ENCODE measurements at regions of chr2 and their contacts with region 1.

Region 1: GRCh38 chr2:37629529-37629928 is 41.9 kb downstream of the CDC42EP3 start:
- DNase-seq: no peak
- ATAC-seq: peak; percentile 32
- H3K4me3 ChIP-seq: no peak overlapping the region
- H3K27ac ChIP-seq: peak overlapping the region; percentile 76
- H3K4me1 ChIP-seq: peaks cover 47% of the 10 kb centered on the region
- H3K27me3 ChIP-seq: no peaks in the 10 kb centered on the region
- CTCF ChIP-seq: no peak
- EP300 ChIP-seq: peak; percentile 35 to 41; a peak in 1 of 4 replicates
- POLR2A ChIP-seq: no peak
- RAD21 ChIP-seq: no peak; the same call in 1 of the 2 replicates

Region 2: GRCh38 chr2:37665604-37666362 is 36.3 kb after region 1 on chr2:
- CTCF ChIA-PET with region 1: interaction called, 10 read pairs
- POLR2A ChIA-PET with region 1: interaction called, 52 read pairs
- RAD21 ChIA-PET with region 1: interaction called, 122 read pairs
- SMC1A ChIA-PET with region 1: interaction called, 96 read pairs
- in situ Hi-C with region 1: no loop called
- intact Hi-C with region 1: loop called (anchors 5 kb)
- DNase-seq: no peak
- ATAC-seq: peak; percentile 2; the same call in 1 of the 3 replicates
- H3K4me3 ChIP-seq: peak overlapping the region; percentile 82
- H3K27ac ChIP-seq: peak overlapping the region; percentile 28; the same call in 1 of the 2 replicates
- H3K4me1 ChIP-seq: 0 out of 2 replicates have a peak, but pooled peaks cover 3% of the 10 kb centered on the region
- H3K27me3 ChIP-seq: no peaks in the 10 kb centered on the region
- CTCF ChIP-seq: no peak
- EP300 ChIP-seq: no peak
- POLR2A ChIP-seq: no peak
- RAD21 ChIP-seq: no peak

Region 3: DNA sequence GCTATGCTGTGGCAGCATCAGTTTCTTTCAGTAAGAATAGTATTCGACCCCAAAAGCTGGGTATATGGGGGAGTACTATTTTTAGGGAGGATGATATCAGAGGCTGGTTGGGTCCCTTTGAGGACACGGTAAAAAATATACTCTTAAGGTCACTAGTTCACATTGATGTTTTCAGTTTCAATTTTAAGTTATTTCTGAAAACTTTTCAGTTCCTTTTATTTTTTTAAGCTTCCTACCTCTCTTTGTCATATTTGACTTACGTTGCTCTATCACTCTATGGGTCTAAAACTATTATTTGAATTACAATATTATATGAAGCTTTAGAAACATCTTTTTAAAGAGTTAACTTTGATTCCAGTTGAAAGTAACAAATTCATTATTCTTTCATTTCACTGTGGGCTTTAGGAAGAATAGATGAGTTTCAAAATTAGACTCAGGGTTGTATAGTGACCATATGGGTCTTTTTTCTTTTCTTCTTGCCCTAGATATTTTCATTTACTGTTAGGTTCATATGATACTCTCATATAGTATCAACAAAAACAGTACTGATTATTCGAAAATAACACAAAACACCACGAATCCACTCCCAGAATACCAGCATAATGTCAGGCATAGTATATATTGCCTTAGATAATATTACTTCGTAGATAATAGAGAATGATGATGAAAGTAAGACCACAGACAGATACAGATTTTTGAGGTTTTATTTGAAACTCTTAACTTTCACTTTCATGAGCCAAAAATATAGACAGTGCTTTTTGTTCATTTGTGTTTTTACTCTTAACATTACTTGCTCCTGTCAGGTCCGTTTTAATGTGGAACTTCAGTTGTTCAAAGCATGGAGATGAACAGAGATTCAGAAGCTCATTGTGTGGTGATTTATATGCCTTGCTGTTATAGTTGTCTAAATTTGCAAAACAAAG is 305.3 kb after region 1 on chr2:
- CTCF ChIA-PET with region 1: no interaction called
- POLR2A ChIA-PET with region 1: no interaction called
- RAD21 ChIA-PET with region 1: no interaction called
- SMC1A ChIA-PET with region 1: no interaction called
- in situ Hi-C with region 1: no loop called
- intact Hi-C with region 1: no loop called
- DNase-seq: peak; percentile 41
- ATAC-seq: peak; percentile 94
- H3K4me3 ChIP-seq: peak overlapping the region; percentile 69
- H3K27ac ChIP-seq: peak overlapping the region; percentile 93
- H3K4me1 ChIP-seq: peaks cover 15% of the 10 kb centered on the region
- H3K27me3 ChIP-seq: no peaks in the 10 kb centered on the region
- CTCF ChIP-seq: no peak
- EP300 ChIP-seq: peak; percentile 62 to 84
- POLR2A ChIP-seq: no peak
- RAD21 ChIP-seq: peak; percentile 27

Region 4: GRCh38 chr2:38394903-38395341 is 765.4 kb after region 1 on chr2:
- CTCF ChIA-PET with region 1: no interaction called
- POLR2A ChIA-PET with region 1: no interaction called
- RAD21 ChIA-PET with region 1: no interaction called
- SMC1A ChIA-PET with region 1: no interaction called
- in situ Hi-C with region 1: no loop called
- intact Hi-C with region 1: no loop called
- DNase-seq: no peak
- ATAC-seq: peak; percentile 92
- H3K4me3 ChIP-seq: no peak overlapping the region
- H3K27ac ChIP-seq: no peak overlapping the region
- H3K4me1 ChIP-seq: no peaks in the 10 kb centered on the region
- H3K27me3 ChIP-seq: peaks cover 0 to 2% of the 10 kb centered on the region in 2 experiments; a peak in 1 of 4 replicates
- CTCF ChIP-seq: no peak
- EP300 ChIP-seq: no peak
- POLR2A ChIP-seq: no peak
- RAD21 ChIP-seq: no peak